HCT116 (cell line): ENCODE measurements at regions of chr6 and their contacts with region 1.

Region 1: DNA sequence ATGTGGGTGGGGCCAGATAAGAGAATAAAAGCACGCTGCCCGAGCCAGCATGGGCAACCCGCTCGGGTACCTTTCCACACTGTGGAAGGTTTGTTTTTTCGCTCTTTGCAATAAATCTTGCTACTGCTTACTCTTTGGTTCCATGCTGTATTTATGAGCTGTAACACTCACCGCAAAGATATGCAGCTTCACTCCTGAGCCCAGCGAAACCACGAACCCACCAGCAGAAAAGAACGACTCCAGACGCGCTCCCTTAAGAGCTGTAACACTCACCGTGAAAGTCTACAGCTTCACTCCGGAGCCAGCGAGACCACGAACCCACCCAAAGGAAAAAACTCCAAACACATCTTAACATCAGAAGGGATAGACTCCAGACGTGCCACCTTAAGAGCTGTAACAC is 76.7 kb downstream of the TFAP2A start:
- DNase-seq: no peak
- ATAC-seq: no peak
- H3K4me3 ChIP-seq: no peak overlapping the region
- H3K27ac ChIP-seq: no peak overlapping the region
- H3K4me1 ChIP-seq: no peaks in the 10 kb centered on the region
- H3K27me3 ChIP-seq: no peaks in the 10 kb centered on the region
- CTCF ChIP-seq: no peak
- POLR2A ChIP-seq: no peak
- RAD21 ChIP-seq: no peak

Region 2: DNA sequence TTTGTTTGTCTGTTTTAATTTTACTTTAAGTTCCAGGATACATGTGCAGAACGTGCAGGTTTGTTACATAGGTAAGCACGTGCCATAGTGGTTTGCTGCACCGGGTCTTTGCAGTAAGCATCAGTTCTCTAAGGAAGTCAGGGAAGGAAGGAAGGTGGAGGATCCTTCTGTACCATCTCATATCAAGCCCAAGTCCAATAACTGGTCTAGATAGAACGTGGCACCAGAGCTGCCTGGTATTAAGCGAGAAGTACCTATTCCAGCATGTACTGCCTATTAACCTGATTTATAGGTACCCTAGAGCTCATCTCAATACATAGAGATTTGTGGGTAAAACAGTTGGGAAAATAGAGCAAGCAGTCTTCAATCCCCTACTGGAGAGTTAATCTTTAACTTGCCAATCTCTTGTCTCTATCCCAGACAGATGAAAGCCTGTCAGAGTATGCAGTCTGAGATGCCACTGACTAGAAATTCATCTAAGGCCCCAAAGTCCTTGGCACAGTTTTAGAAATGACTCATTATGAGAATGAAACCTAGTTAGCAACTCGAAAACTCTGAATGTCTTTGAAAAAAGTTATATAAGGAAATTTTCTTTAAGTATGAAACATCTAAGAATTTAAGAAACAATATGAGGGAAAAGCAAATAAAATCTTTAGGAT is 68.2 kb before region 1 on chr6:
- CTCF ChIA-PET with region 1: no interaction called
- POLR2A ChIA-PET with region 1: no interaction called
- RAD21 ChIA-PET with region 1: no interaction called
- intact Hi-C with region 1: loop called (anchors 2 kb)
- DNase-seq: no peak
- ATAC-seq: no peak
- H3K4me3 ChIP-seq: no peak overlapping the region
- H3K27ac ChIP-seq: no peak overlapping the region
- H3K4me1 ChIP-seq: no peaks in the 10 kb centered on the region
- H3K27me3 ChIP-seq: no peaks in the 10 kb centered on the region
- CTCF ChIP-seq: no peak
- POLR2A ChIP-seq: no peak
- RAD21 ChIP-seq: no peak